HepG2 (cell line): ENCODE measurements at regions of chr6 and their contacts with region 1.

Region 1: GRCh38 chr6:26216356-26216885 is 129.2 kb downstream of the HFE start:
- DNase-seq: peak; percentile 99
- ATAC-seq: peak; percentile 64
- H3K4me3 ChIP-seq: peak overlapping the region; percentile 60 to 75 (median 72)
- H3K27ac ChIP-seq: peak overlapping the region; percentile 89
- H3K4me1 ChIP-seq: peaks cover 30% of the 10 kb centered on the region
- H3K27me3 ChIP-seq: no peaks in the 10 kb centered on the region; a peak in 1 of 5 replicates
- CTCF ChIP-seq: no peak
- EP300 ChIP-seq: peak in 1 of 2 experiments; percentile 48; a peak in 1 of 4 replicates
- POLR2A ChIP-seq: peak; percentile 97 to 99
- RAD21 ChIP-seq: peak; percentile 26; the same call in 1 of the 2 replicates

Region 2: DNA sequence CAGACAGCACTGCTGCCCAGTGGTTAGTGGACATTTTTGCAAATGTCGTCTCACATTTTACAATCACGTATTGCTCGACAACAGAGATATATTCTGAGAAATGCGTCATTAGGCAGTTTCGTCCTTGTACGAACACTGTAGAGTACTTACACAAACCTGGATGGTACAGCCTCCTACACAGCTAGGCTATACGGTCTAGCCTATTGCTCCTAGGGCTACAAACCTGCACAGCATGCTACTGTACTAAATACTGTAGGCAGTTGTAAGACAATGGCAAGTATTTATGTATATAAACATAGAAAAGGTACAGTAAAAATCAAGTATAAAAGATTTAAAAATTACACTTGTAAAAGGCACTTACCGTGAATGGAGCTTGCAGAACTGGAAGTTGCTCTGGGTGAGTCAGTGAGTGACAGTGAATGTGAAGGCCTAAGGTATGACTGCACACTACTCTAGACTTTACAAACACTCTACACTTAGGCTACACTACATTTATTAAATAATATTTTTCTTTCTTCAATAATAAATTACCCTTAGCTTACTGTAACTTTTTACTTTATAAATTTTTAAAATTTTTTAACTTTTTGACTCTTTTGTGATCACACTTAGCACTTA is 1678.5 kb before region 1 on chr6:
- CTCF ChIA-PET with region 1: no interaction called
- POLR2A ChIA-PET with region 1: no interaction called
- in situ Hi-C with region 1: no loop called
- intact Hi-C with region 1: no loop called
- DNase-seq: no peak
- ATAC-seq: no peak
- H3K4me3 ChIP-seq: no peak overlapping the region
- H3K27ac ChIP-seq: no peak overlapping the region
- H3K4me1 ChIP-seq: no peaks in the 10 kb centered on the region
- H3K27me3 ChIP-seq: no peaks in the 10 kb centered on the region
- CTCF ChIP-seq: no peak
- EP300 ChIP-seq: no peak
- POLR2A ChIP-seq: no peak
- RAD21 ChIP-seq: no peak

Region 3: DNA sequence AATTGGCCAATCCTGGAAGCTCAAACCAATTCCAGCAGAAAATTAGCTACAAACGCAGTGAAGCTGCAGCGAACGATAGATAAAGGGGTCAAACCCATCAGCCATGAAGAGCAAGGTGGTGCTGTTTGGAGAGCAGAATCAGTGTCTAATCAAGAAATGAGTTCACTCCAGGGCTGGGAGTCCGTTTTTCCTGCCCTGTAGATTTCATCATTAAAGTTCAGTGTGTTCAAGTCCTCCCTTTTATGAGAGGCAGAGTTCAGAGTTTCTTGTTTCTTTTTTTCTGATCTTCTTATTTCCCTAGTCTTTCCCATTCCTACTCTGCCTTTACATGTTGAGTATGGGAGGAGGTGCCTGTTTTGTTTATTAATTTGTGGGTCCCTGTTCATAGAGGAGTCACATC is 415.0 kb before region 1 on chr6:
- CTCF ChIA-PET with region 1: no interaction called
- POLR2A ChIA-PET with region 1: no interaction called
- in situ Hi-C with region 1: no loop called
- intact Hi-C with region 1: no loop called
- DNase-seq: no peak
- ATAC-seq: no peak
- H3K4me3 ChIP-seq: no peak overlapping the region
- H3K27ac ChIP-seq: no peak overlapping the region
- H3K4me1 ChIP-seq: no peaks in the 10 kb centered on the region
- H3K27me3 ChIP-seq: no peaks in the 10 kb centered on the region
- CTCF ChIP-seq: no peak
- EP300 ChIP-seq: no peak
- POLR2A ChIP-seq: no peak
- RAD21 ChIP-seq: no peak

Region 4: DNA sequence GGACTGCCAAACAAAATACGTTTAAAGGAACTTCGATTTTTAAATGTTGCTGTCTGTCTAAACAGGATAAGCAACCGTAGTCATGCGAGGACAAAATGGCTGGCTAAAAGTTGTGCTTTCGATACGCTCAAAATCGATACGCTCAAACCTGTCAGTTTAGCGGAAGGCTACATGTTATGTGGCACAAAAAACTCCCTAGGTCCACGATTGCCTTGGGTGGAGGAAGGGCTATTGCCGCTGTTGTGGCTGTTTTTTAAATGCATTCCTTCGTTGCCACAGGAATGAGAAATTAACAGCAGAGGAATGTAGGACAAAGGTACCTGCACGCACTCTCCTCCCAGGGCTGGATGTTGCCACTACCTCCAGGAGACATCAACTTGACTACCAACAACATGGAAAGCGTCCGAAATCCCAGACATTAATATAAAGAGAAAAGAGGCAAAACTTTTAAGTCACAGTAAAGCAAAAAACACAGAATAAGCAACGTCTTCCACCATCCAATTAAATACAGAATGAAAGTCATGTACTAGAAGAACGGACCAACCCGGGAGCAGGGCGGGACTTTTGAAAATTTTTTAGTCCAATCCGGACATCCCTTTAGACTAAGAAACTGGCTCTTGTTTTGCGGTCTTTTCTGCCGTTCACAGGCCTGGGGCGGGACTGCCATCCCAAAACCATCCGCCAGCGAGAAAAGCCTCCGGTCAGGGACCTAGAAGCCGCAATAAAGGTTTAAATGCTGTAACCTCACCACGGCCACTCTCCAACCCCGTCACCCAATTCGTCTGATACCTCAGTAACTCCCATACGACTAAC is 161.4 kb before region 1 on chr6:
- CTCF ChIA-PET with region 1: no interaction called
- POLR2A ChIA-PET with region 1: interaction called, 14 read pairs
- in situ Hi-C with region 1: no loop called
- intact Hi-C with region 1: loop called (anchors 5 kb)
- DNase-seq: peak; percentile 97
- ATAC-seq: peak; percentile 82
- H3K4me3 ChIP-seq: peak overlapping the region; percentile 69 to 85 (median 85)
- H3K27ac ChIP-seq: peak overlapping the region; percentile 90
- H3K4me1 ChIP-seq: peaks cover 26% of the 10 kb centered on the region
- H3K27me3 ChIP-seq: no peaks in the 10 kb centered on the region; a peak in 1 of 5 replicates
- CTCF ChIP-seq: peak; percentile 32; the same call in 1 of the 2 replicates
- EP300 ChIP-seq: peak in 1 of 2 experiments; percentile 27; a peak in 1 of 4 replicates
- POLR2A ChIP-seq: peak; percentile 79 to 98; a peak in 3 of 4 replicates
- RAD21 ChIP-seq: peak; percentile 50

Region 5: DNA sequence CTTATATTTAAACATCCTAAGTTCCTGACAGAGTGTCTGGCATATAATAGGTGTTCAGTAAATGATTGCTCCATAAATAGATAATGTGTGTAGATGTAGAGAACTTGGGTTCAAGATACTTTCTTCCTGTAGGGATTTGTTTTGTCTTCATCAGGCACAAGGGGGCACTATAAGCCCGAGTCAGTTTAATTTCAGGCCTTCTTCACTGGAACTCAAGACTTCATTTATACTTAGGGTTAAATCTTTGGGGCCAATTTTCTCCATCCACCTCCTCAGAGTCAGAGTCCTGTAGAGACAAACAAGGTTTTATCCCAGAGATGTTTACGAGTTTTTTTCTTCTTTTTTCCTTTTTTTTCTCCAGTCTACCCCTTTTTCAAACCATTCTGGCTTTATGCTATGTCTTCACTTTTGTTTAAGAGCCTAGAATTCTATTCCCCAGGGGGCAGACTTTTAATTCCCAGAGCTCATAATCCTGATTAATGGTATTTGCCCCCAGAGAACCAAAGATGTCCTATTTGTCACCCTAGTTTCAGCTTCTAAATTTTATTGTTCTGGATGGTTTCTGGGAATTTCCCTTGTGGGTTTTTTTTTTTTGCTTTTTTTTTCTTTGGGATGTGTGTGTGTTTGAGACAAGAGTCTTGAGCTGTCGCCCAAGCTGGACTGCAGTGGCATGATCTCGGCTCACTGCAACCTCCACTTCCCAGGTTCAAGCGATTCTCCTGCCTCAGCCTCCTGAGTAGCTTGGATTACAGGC is 40.8 kb before region 1 on chr6:
- CTCF ChIA-PET with region 1: interaction called, 6 read pairs
- POLR2A ChIA-PET with region 1: interaction called, 10 read pairs
- in situ Hi-C with region 1: no loop called
- intact Hi-C with region 1: loop called (anchors 1 kb)
- DNase-seq: peak; percentile 72
- ATAC-seq: peak; percentile 55
- H3K4me3 ChIP-seq: no peak overlapping the region
- H3K27ac ChIP-seq: no peak overlapping the region
- H3K4me1 ChIP-seq: peaks cover 12% of the 10 kb centered on the region
- H3K27me3 ChIP-seq: no peaks in the 10 kb centered on the region
- CTCF ChIP-seq: peak; percentile 79
- EP300 ChIP-seq: no peak
- POLR2A ChIP-seq: no peak
- RAD21 ChIP-seq: peak; percentile 76

Region 6: GRCh38 chr6:26234421-26235296 is 18.2 kb after region 1 on chr6:
- CTCF ChIA-PET with region 1: no interaction called
- POLR2A ChIA-PET with region 1: interaction called, 14 read pairs
- in situ Hi-C with region 1: no loop called
- intact Hi-C with region 1: no loop called
- DNase-seq: no peak
- ATAC-seq: peak; percentile 90
- H3K4me3 ChIP-seq: peak overlapping the region; percentile 49 to 73 (median 60)
- H3K27ac ChIP-seq: no peak overlapping the region
- H3K4me1 ChIP-seq: peaks cover 25% of the 10 kb centered on the region; the same call in 1 of the 2 replicates
- H3K27me3 ChIP-seq: peaks cover 0 to 28% of the 10 kb centered on the region in 2 experiments; a peak in 3 of 5 replicates
- CTCF ChIP-seq: no peak
- EP300 ChIP-seq: no peak
- POLR2A ChIP-seq: no peak
- RAD21 ChIP-seq: no peak

Region 7: GRCh38 chr6:26304797-26305640 is 88.6 kb after region 1 on chr6:
- CTCF ChIA-PET with region 1: no interaction called
- POLR2A ChIA-PET with region 1: interaction called, 11 read pairs
- in situ Hi-C with region 1: no loop called
- intact Hi-C with region 1: no loop called
- DNase-seq: peak; percentile 77
- ATAC-seq: peak; percentile 74
- H3K4me3 ChIP-seq: peak overlapping the region; percentile 4 to 44 (median 34); a peak in 5 of 6 replicates
- H3K27ac ChIP-seq: no peak overlapping the region
- H3K4me1 ChIP-seq: peaks cover 68% of the 10 kb centered on the region
- H3K27me3 ChIP-seq: no peaks in the 10 kb centered on the region
- CTCF ChIP-seq: no peak
- EP300 ChIP-seq: no peak
- POLR2A ChIP-seq: no peak
- RAD21 ChIP-seq: no peak

Region 8: DNA sequence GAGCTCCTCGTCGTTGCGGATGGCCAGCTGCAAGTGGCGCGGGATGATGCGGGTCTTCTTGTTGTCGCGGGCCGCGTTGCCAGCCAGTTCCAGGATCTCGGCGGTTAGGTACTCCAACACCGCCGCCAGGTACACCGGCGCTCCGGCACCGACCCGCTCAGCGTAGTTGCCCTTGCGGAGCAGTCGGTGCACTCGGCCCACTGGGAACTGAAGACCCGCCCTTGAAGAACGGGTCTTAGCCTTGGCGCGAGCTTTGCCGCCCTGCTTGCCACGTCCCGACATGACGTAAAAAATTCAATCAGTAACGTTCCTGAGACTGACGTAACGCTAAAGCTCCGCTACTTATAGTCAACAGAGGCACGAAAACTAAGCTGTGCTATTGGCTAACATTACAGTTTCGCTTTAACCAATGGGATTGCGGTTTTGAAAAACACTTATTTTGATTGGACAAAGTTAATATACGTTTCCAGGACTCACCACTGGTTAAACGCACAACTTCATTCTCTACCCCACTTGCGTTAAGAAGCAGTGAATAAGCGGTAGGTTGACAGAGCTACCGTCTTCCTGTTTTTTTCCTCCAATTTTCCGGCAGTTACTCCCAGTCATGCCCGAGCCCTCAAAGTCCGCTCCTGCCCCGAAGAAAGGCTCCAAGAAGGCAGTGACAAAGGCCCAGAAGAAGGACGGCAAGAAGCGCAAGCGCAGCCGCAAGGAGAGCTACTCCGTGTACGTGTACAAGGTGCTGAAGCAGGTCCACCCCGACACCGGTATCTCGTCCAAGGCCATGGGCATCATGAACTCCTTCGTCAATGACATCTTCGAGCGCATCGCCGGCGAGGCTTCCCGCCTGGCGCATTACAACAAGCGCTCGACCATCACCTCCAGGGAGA is 1621.9 kb after region 1 on chr6:
- CTCF ChIA-PET with region 1: no interaction called
- POLR2A ChIA-PET with region 1: interaction called, 14 read pairs
- in situ Hi-C with region 1: no loop called
- intact Hi-C with region 1: no loop called
- DNase-seq: peak; percentile 100
- ATAC-seq: peak; percentile 87
- H3K4me3 ChIP-seq: peak overlapping the region; percentile 79 to 84 (median 83)
- H3K27ac ChIP-seq: peak overlapping the region; percentile 92
- H3K4me1 ChIP-seq: peaks cover 34% of the 10 kb centered on the region
- H3K27me3 ChIP-seq: no peaks in the 10 kb centered on the region; a peak in 1 of 5 replicates
- CTCF ChIP-seq: no peak
- EP300 ChIP-seq: 0 out of 4 replicates have a peak, but pooled peaks of 1 of the 2 experiments have one; percentile 6
- POLR2A ChIP-seq: peak; percentile 82 to 99
- RAD21 ChIP-seq: no peak; the same call in 1 of the 2 replicates